AG04450 (cell line): ENCODE measurements at regions of chr4 and their contacts with region 1.

Region 1: GRCh38 chr4:41257257-41257901 is 651 bp downstream of the UCHL1 start:
- DNase-seq: no peak
- H3K4me3 ChIP-seq: peak overlapping the region; percentile 90
- H3K27ac ChIP-seq: peak overlapping the region; percentile 75
- H3K27me3 ChIP-seq: peaks cover 5% of the 10 kb centered on the region
- CTCF ChIP-seq: no peak

Region 2: GRCh38 chr4:40865696-40866095 is 391.7 kb before region 1 on chr4:
- CTCF ChIA-PET with region 1: no interaction called
- POLR2A ChIA-PET with region 1: interaction called, 10 read pairs
- DNase-seq: no peak
- H3K4me3 ChIP-seq: no peak overlapping the region
- H3K27ac ChIP-seq: no peak overlapping the region
- H3K27me3 ChIP-seq: no peaks in the 10 kb centered on the region
- CTCF ChIP-seq: no peak

Region 3: DNA sequence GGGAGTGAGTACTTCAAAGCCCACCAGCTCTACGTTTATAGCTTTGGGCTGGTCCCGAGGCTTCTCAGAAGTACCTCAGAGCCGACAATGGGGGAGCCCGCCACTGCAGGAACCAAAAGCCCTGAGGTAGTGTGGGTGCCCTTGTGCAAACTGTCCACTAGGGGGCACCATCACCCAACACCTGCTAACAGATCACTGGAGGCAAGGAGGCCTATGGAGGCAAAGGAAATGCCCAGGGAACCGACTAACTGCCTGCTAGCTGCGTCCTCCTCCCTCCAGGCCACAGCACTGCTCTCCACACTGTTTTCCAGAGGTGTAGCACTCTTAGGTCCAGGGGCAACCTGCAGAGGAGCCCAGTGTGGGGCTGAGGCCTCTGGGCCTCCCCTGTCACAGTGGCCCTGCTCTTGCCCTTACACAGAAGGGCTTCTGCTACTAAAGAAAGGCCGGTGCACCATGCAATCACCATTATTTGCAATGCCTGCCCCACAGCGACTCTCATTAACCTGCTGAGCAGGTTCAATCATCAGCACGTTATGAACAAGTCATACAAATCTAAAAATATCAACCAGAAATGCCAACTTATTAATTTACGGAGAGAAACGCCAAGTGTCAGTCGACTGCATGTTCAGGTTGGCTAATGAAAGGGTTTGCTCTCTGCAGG is 348.5 kb before region 1 on chr4:
- CTCF ChIA-PET with region 1: interaction called, 15 read pairs
- POLR2A ChIA-PET with region 1: no interaction called
- DNase-seq: peak; percentile 44
- H3K4me3 ChIP-seq: no peak overlapping the region
- H3K27ac ChIP-seq: peak overlapping the region; percentile 54
- H3K27me3 ChIP-seq: no peaks in the 10 kb centered on the region
- CTCF ChIP-seq: peak; percentile 91

Region 4: DNA sequence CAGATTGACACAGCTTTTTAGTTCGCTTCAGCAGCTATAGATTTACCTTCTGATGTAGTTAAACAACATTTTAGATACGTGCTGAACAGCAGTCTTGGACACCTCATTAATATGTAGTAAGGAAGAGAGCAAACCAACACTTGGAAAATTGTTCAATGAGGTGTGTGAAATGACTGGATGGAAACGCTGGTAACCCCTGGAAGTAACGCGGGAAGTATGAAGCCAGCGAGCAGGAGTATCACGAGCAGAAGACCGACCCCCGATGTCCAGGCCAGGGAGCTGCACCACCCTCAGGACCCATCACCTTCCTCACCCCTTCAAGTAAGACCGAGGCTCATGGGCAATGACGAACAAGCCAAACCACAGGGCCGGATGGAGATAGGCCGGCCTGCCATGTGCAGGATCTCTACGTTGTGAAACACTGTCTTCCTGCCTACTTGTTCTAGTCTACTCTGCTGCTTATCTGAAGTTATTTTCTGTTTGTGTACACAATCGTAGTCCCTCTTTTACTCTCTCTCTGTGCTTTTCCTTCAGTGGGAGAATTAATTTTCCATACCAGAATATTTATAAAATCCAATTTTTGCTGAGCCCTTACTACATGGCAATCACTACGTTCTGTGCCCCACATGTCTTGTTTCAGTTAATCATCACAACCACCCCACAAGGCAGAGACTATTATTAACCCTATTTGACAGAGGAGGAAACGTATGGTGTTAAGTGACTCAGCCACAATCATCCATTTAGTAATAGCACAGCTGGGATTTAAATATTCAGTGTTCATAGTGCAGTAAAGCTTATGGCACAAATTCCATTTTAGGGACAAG is 264.7 kb before region 1 on chr4:
- CTCF ChIA-PET with region 1: no interaction called
- POLR2A ChIA-PET with region 1: interaction called, 12 read pairs
- DNase-seq: no peak
- H3K4me3 ChIP-seq: no peak overlapping the region
- H3K27ac ChIP-seq: peak overlapping the region; percentile 72
- H3K27me3 ChIP-seq: no peaks in the 10 kb centered on the region
- CTCF ChIP-seq: no peak

Region 5: GRCh38 chr4:41111791-41112190 is 145.6 kb before region 1 on chr4:
- CTCF ChIA-PET with region 1: no interaction called
- POLR2A ChIA-PET with region 1: no interaction called
- DNase-seq: no peak
- H3K4me3 ChIP-seq: no peak overlapping the region
- H3K27ac ChIP-seq: no peak overlapping the region
- H3K27me3 ChIP-seq: no peaks in the 10 kb centered on the region
- CTCF ChIP-seq: no peak

Region 6: DNA sequence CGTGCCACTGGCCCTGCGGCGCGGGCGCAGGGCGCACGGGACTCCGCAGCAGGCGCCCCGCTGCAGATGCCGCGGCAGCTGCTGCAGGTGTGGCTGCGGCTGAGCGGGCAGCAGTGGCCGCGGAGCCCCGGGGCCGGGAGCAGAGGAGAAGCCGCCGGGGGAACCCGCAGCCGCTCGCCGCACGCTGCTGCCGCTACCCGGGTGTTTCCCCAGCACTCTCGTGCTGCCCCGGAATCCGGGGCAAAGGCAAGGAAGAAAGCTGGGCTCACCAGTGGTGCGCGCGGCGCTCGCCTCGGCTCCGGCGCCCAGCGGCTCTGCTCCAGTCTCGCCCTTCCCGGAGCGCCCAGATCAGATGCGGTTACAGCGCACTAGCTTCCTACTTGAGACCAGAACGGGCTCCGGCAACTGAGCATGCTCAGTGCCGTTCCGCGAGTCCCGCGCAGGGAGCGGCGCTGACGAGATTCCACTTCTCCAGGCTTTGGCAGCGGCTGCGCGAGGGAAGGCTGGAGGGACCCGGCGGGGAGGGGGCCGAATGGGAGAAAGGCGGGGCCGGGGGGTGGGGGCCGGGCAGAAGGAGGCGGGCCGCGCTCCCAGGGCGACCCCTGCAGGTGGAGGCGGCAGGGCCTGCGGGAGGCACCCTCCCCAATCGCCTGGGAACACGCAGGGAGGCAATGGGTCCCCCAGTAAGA is 43.1 kb before region 1 on chr4 and contains the start of gene APBB2:
- CTCF ChIA-PET with region 1: interaction called, 13 read pairs
- POLR2A ChIA-PET with region 1: interaction called, 21 read pairs
- DNase-seq: peak; percentile 96
- H3K4me3 ChIP-seq: peak within 1 kb of the TSS; percentile 93
- H3K27ac ChIP-seq: peak within 1 kb of the TSS; percentile 65
- H3K27me3 ChIP-seq: no peaks in the 10 kb centered on the region
- CTCF ChIP-seq: peak; percentile 74
- polyA plus RNA-seq, gene APBB2: 52.7 and 52.8 TPM in 2 replicates

Region 7: DNA sequence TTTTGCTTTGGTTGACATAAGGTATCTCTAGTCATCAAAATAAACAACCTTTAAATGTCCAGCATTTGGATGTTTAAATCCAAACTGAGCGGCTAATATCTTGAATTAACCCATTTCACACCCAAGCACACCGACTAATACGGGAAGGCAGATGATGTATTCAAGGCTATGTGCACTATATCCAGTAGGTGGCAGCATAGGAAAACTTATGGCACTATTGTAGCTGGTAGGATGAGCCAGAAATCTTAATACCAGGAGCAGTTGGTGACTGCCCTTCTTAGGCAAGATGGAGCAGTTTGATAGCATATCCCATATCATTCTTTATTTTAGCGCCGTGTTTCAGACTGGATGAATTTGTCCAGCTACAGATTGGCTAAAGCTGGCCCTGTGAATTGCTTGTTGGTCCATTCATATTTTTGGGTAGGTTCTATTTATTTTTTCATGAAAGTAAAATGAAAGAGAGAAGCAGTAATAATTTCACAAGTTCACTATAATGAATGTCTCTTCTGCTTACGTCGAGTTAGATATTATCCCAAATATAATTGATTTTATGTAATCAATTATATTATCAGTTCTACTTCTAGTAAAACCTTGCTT is 23.8 kb after region 1 on chr4:
- CTCF ChIA-PET with region 1: interaction called, 32 read pairs
- POLR2A ChIA-PET with region 1: interaction called, 4 read pairs
- DNase-seq: no peak
- H3K4me3 ChIP-seq: no peak overlapping the region
- H3K27ac ChIP-seq: no peak overlapping the region
- H3K27me3 ChIP-seq: no peaks in the 10 kb centered on the region
- CTCF ChIP-seq: peak; percentile 91

Region 8: GRCh38 chr4:41600243-41600912 is 343.0 kb after region 1 on chr4:
- CTCF ChIA-PET with region 1: no interaction called
- POLR2A ChIA-PET with region 1: no interaction called
- DNase-seq: no peak
- H3K4me3 ChIP-seq: no peak overlapping the region
- H3K27ac ChIP-seq: no peak overlapping the region
- H3K27me3 ChIP-seq: no peaks in the 10 kb centered on the region
- CTCF ChIP-seq: no peak

Region 9: DNA sequence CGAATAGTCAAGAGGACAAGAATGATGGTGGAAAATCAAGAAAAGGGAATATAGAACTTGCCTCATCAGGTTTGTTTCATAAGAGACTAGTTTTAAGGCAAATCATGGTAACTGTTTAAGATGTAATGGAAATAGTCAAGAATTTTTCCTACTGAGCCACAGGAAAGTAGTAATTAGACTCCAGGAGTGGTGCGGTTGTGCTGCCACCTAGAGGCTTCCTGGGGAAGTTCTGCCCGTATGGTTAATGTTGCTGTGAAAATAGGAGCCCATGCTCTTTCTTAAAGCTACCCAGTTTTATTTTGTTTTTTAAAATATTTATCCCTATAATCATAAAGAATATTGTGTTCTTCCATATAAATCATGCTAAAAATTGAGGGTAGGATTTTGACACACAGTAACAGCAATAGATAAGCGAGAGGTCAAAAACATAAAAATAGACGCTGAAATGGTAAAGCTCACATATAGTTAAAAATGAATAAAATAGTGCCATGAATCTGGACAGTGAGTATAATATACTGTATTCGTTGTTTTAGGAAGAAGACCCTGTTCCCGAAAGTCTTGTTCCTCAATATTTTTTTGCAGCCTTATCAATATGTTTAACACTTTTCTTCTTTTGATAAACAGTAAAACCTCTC is 404.2 kb after region 1 on chr4:
- CTCF ChIA-PET with region 1: interaction called, 51 read pairs
- POLR2A ChIA-PET with region 1: no interaction called
- DNase-seq: peak; percentile 11
- H3K4me3 ChIP-seq: no peak overlapping the region
- H3K27ac ChIP-seq: no peak overlapping the region
- H3K27me3 ChIP-seq: peaks cover 2% of the 10 kb centered on the region
- CTCF ChIP-seq: peak; percentile 98